ENCODE measurements at regions of chr11 and their contacts with region 1.

Region 1: GRCh38 chr11:66142370-66143263 is 72.5 kb downstream of the PACS1 start:
- DNase-seq: peak; percentile 53
- ATAC-seq: peak; percentile 27; the same call in 1 of the 2 replicates
- H3K4me3 ChIP-seq: no peak overlapping the region
- H3K27ac ChIP-seq: no peak overlapping the region
- H3K4me1 ChIP-seq: peaks cover 5% of the 10 kb centered on the region
- H3K27me3 ChIP-seq: no peaks in the 10 kb centered on the region
- CTCF ChIP-seq: no peak
- POLR2A ChIP-seq: no peak
- RAD21 ChIP-seq: no peak

Region 2: DNA sequence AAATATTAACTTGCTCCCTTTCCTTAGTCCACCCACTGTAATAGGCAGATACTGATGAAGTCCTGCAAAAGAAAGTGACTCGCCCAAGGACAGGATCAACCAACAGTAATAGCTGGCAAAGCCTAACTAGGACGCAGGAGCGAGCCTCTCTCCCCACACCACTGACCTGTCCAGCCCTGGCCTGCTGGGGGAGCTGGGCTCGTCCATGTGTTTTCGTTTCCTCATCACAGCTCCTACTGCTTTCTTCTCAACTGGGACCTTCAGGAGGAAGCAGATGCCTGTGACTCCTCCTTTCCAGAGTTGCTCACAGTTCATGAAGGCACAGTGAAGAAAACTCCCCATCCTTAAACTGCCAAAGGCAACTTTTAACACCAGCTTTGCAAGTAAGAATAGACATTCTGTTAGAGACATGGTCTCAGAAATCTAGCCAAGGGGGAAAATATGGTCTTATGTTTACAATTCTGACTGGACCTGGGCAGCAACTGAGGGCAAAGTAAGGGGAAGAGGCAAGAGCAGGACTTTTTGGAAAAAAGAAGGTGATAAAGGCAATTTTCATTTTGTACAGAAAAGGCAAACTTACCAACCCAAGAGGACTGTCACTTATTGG is 1195.3 kb before region 1 on chr11:
- CTCF ChIA-PET with region 1: no interaction called
- POLR2A ChIA-PET with region 1: no interaction called
- dilution Hi-C with region 1: no loop called
- in situ Hi-C with region 1: no loop called
- intact Hi-C with region 1: no loop called
- DNase-seq: no peak
- ATAC-seq: no peak; the same call in 1 of the 2 replicates
- H3K4me3 ChIP-seq: no peak overlapping the region
- H3K27ac ChIP-seq: no peak overlapping the region
- H3K4me1 ChIP-seq: no peaks in the 10 kb centered on the region
- H3K27me3 ChIP-seq: peaks cover 33% of the 10 kb centered on the region
- CTCF ChIP-seq: no peak
- POLR2A ChIP-seq: no peak
- RAD21 ChIP-seq: no peak

Region 3: GRCh38 chr11:66126808-66127555 is 15.6 kb before region 1 on chr11:
- CTCF ChIA-PET with region 1: no interaction called
- POLR2A ChIA-PET with region 1: no interaction called
- dilution Hi-C with region 1: no loop called
- in situ Hi-C with region 1: no loop called
- intact Hi-C with region 1: no loop called
- DNase-seq: peak; percentile 79
- ATAC-seq: peak; percentile 90
- H3K4me3 ChIP-seq: no peak overlapping the region
- H3K27ac ChIP-seq: peak overlapping the region; percentile 17
- H3K4me1 ChIP-seq: peaks cover 14% of the 10 kb centered on the region
- H3K27me3 ChIP-seq: no peaks in the 10 kb centered on the region
- CTCF ChIP-seq: no peak
- POLR2A ChIP-seq: no peak
- RAD21 ChIP-seq: peak; percentile 12; the same call in 1 of the 2 replicates

Region 4: DNA sequence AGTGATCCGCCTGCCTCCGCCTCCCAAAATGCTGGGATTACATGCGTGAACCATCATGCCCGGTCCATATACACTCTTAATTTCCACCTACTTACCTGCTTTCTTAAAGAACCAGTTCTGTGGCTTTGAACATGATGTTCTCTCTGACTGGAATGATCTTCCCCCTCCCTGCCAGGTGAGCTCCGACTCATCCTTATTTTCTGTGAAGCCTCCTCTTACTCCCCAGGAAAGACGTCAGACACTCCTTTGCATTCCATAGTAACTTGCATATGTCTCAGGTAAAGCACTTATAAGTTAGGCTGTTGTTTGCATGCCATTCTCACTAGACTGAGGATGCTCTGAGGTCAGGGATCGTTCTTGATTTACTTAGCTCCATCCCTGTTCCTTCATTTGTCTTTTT is 34.0 kb after region 1 on chr11:
- CTCF ChIA-PET with region 1: no interaction called
- POLR2A ChIA-PET with region 1: no interaction called
- dilution Hi-C with region 1: no loop called
- in situ Hi-C with region 1: no loop called
- intact Hi-C with region 1: loop called (anchors 5 kb)
- DNase-seq: no peak
- ATAC-seq: no peak; the same call in 1 of the 2 replicates
- H3K4me3 ChIP-seq: no peak overlapping the region
- H3K27ac ChIP-seq: no peak overlapping the region
- H3K4me1 ChIP-seq: peaks cover 4% of the 10 kb centered on the region
- H3K27me3 ChIP-seq: no peaks in the 10 kb centered on the region
- CTCF ChIP-seq: no peak
- POLR2A ChIP-seq: no peak
- RAD21 ChIP-seq: no peak

Measured in IMR-90 (cell line).